Activated CD8-positive, alpha-beta T cell treated with anti-CD3 and anti-CD28 coated beads for 36 hours (primary cell): ENCODE measurements at regions of chr7 and their contacts with region 1.

Region 1: DNA sequence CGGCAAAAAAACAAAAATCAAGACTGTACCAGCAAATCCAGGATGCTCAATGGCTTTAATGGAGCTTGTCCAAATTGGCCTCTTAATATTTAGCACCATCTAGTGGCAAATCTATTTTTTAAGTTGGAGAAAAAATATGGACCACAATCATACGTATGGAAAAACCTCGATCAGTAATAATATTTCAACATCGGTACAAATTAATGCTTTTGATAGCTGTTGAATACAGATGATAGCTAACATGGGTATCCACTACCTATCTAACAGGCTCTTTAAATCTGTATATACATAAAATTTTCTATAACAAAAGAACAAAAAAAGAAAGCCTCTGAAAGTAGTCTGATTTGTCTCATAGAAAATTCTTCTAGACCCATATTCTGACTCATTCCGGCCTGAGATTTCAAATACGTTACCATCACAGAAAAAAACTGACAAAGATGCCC is 29.2 kb downstream of the COA1 start:
- DNase-seq: no peak
- ATAC-seq: peak; percentile 50
- H3K4me3 Mint-ChIP-seq: no peak overlapping the region
- H3K27ac Mint-ChIP-seq: no peak overlapping the region
- H3K4me1 Mint-ChIP-seq: peaks cover 60% of the 10 kb centered on the region
- H3K27me3 Mint-ChIP-seq: no peaks in the 10 kb centered on the region
- CTCF ChIP-seq: peak; percentile 91

Region 2: DNA sequence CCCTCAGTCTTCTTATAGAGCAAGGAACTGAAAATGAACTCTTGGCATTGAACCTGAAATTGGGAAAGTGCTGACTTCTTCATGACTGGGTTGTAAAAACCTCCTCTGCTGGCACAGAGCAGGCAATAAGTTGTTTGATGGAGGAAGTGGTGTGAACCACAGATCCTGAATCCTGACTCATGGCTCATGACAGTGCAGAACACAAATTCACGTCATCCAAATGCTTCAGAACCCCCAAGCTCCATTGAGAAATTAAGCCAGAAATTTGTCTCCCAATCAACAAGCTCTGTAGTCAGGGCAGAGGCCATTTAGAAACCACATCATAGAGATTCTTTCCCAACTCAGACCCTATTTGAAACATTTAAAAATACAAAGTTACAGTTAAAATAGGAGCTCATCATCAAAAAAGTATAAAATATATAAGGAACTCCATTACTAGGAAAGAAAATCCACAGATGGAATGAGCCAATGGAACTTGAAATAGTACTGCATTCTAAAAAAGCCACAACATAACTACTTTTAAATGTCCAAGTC is 127.5 kb before region 1 on chr7:
- CTCF ChIA-PET with region 1: interaction called, 452 read pairs
- POLR2A ChIA-PET with region 1: no interaction called
- intact Hi-C with region 1: no loop called
- DNase-seq: peak; percentile 66
- ATAC-seq: peak; percentile 83
- H3K4me3 Mint-ChIP-seq: no peak overlapping the region
- H3K27ac Mint-ChIP-seq: no peak overlapping the region
- H3K4me1 Mint-ChIP-seq: peaks cover 33% of the 10 kb centered on the region
- H3K27me3 Mint-ChIP-seq: peaks cover 1% of the 10 kb centered on the region
- CTCF ChIP-seq: no peak

Region 3: GRCh38 chr7:43625453-43625852 is 74.6 kb before region 1 on chr7:
- CTCF ChIA-PET with region 1: interaction called, 50 read pairs
- POLR2A ChIA-PET with region 1: interaction called, 4 read pairs
- intact Hi-C with region 1: no loop called
- DNase-seq: peak; percentile 84
- ATAC-seq: peak; percentile 75
- H3K4me3 Mint-ChIP-seq: peak overlapping the region; percentile 17
- H3K27ac Mint-ChIP-seq: peak overlapping the region; percentile 80
- H3K4me1 Mint-ChIP-seq: peaks cover 90% of the 10 kb centered on the region
- H3K27me3 Mint-ChIP-seq: no peaks in the 10 kb centered on the region
- CTCF ChIP-seq: no peak

Region 4: GRCh38 chr7:43647673-43648472 is 52.2 kb before region 1 on chr7:
- CTCF ChIA-PET with region 1: interaction called, 62 read pairs
- POLR2A ChIA-PET with region 1: interaction called, 8 read pairs
- intact Hi-C with region 1: loop called (anchors 5 kb)
- DNase-seq: peak; percentile 74
- ATAC-seq: peak; percentile 58
- H3K4me3 Mint-ChIP-seq: peak overlapping the region; percentile 57
- H3K27ac Mint-ChIP-seq: peak overlapping the region; percentile 99
- H3K4me1 Mint-ChIP-seq: peaks cover 93% of the 10 kb centered on the region
- H3K27me3 Mint-ChIP-seq: no peaks in the 10 kb centered on the region
- CTCF ChIP-seq: no peak

Region 5: DNA sequence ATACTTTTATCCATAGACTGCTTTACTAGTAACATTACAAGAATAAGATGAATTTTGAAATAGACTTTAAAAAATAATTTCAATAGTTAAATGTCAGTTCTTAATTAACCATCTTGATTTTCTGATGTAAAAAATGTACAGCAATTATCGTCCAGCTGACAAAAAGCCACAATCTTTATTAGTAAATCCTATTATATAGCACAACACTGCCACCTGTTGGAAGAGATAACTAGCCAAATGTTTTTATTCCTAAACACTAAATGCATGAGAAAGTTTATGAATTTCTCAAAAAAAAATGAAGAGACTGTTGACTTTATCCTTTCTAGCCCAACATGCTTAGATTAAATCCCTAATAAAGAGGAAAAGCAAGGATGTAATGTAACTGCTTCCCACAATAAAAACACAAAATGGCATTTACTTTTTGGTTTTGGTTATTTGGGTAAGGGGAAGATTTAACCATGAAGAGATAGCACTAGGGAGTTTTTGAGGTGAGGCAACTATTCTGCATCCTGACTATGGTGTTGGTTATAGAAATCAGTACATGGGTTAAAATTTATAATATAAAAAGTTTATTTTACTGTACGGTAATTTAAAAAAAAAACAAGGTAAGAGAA is 21.2 kb after region 1 on chr7:
- CTCF ChIA-PET with region 1: interaction called, 55 read pairs
- POLR2A ChIA-PET with region 1: interaction called, 4 read pairs
- intact Hi-C with region 1: no loop called
- DNase-seq: no peak
- ATAC-seq: no peak
- H3K4me3 Mint-ChIP-seq: no peak overlapping the region
- H3K27ac Mint-ChIP-seq: no peak overlapping the region
- H3K4me1 Mint-ChIP-seq: peaks cover 52% of the 10 kb centered on the region
- H3K27me3 Mint-ChIP-seq: no peaks in the 10 kb centered on the region
- CTCF ChIP-seq: peak; percentile 80